ENCODE measurements at regions of chr5 and their contacts with region 1.

Region 1: GRCh38 chr5:173972925-173973615 is 15.9 kb upstream of the C5orf47 start:
- DNase-seq: peak; percentile 68 to 82
- ATAC-seq: peak; percentile 83 to 84
- H3K4me3 ChIP-seq: peak overlapping the region; percentile 45 to 63 (median 54)
- H3K27ac ChIP-seq: peak overlapping the region; percentile 74 to 85 (median 78)
- H3K4me1 ChIP-seq: peaks cover 5 to 8% of the 10 kb centered on the region in 2 donors
- H3K27me3 ChIP-seq: no peaks in the 10 kb centered on the region
- CTCF ChIP-seq: peak; percentile 88 to 98 (median 94)
- POLR2A ChIP-seq: no peak

Region 2: GRCh38 chr5:173331956-173332479 is 641.1 kb before region 1 on chr5:
- in situ Hi-C with region 1: no loop called
- intact Hi-C with region 1: loop called (anchors 10 kb)
- DNase-seq: peak; percentile 49 to 82
- ATAC-seq: peak; percentile 47
- H3K4me3 ChIP-seq: no peak overlapping the region
- H3K27ac ChIP-seq: no peak overlapping the region
- H3K4me1 ChIP-seq: peaks cover 8 to 27% of the 10 kb centered on the region in 2 donors
- H3K27me3 ChIP-seq: no peaks in the 10 kb centered on the region
- CTCF ChIP-seq: peak; percentile 84 to 93 (median 90)
- POLR2A ChIP-seq: no peak

Region 3: GRCh38 chr5:173623296-173623771 is 349.7 kb before region 1 on chr5:
- in situ Hi-C with region 1: loop called (anchors 5 kb)
- intact Hi-C with region 1: loop called (anchors 1 kb)
- DNase-seq: no peak
- ATAC-seq: no peak
- H3K4me3 ChIP-seq: no peak overlapping the region
- H3K27ac ChIP-seq: no peak overlapping the region
- H3K4me1 ChIP-seq: peaks cover 18 to 24% of the 10 kb centered on the region in 2 donors
- H3K27me3 ChIP-seq: no peaks in the 10 kb centered on the region
- CTCF ChIP-seq: no peak
- POLR2A ChIP-seq: no peak

Region 4: DNA sequence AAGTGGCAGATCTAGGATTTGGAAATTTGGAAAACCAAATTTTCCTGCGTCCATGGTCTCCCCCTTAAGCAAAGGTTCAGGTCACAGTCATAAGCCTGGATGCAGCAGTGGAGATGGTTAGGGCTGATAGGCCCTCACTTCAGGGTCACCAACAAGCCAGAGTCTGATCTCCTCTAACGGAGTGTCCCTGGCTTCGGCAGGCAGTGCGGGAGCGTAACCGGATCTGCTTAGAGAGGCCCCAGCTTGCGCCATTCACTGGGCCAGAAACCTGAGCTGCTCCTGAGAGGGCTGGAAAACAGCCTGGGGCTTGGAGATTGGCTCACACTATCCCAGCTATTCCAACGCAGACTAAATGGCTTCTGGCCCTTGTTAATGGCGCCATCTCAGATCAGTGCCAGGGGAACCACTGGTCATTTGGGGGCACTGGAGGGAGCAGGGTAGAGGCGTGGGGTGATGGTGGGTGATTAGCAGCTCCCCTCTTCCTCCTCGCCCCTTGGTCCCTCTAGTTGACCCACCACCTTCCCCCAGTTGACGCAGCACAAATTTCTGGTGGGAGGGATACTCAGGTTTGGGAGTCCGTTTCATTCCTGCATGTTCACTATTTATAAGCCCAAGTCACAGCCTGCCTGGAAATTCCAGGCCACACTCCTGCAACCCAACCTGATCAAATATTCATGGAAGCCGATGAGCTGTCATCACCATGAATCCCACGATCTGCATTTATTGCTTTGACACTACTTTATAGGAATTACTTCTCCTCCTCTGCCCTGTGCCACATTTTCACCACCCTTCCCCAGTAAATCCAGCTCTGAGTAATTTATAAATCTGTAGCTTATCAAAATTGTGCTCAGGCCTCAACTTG is 219.5 kb before region 1 on chr5:
- in situ Hi-C with region 1: loop called in 3 of 4 experiments (anchors 10 to 25 kb)
- intact Hi-C with region 1: loop called (anchors 5 kb)
- DNase-seq: peak; percentile 91 to 97
- ATAC-seq: peak; percentile 88 to 91
- H3K4me3 ChIP-seq: peak overlapping the region in 2 of 4 donors; percentile 29 to 35
- H3K27ac ChIP-seq: peak overlapping the region; percentile 88 to 97 (median 92)
- H3K4me1 ChIP-seq: peaks cover 44 to 47% of the 10 kb centered on the region in 2 donors
- H3K27me3 ChIP-seq: no peaks in the 10 kb centered on the region
- CTCF ChIP-seq: no peak
- POLR2A ChIP-seq: no peak

Region 5: GRCh38 chr5:173835131-173835530 is 137.9 kb before region 1 on chr5:
- in situ Hi-C with region 1: no loop called
- intact Hi-C with region 1: loop called (anchors 5 kb)
- DNase-seq: peak in 1 of 2 donors; percentile 52
- ATAC-seq: peak; percentile 4 to 19
- H3K4me3 ChIP-seq: no peak overlapping the region
- H3K27ac ChIP-seq: peak overlapping the region; percentile 57 to 87 (median 83)
- H3K4me1 ChIP-seq: peaks cover 34% of the 10 kb centered on the region in 2 donors
- H3K27me3 ChIP-seq: no peaks in the 10 kb centered on the region
- CTCF ChIP-seq: no peak
- POLR2A ChIP-seq: no peak

Region 6: GRCh38 chr5:173984218-173984617 is 11.1 kb after region 1 on chr5:
- in situ Hi-C with region 1: no loop called
- intact Hi-C with region 1: no loop called
- DNase-seq: no peak
- ATAC-seq: peak; percentile 52 to 53
- H3K4me3 ChIP-seq: no peak overlapping the region
- H3K27ac ChIP-seq: no peak overlapping the region
- H3K4me1 ChIP-seq: no peaks in the 10 kb centered on the region
- H3K27me3 ChIP-seq: no peaks in the 10 kb centered on the region
- CTCF ChIP-seq: peak; percentile 14 to 48 (median 34)
- POLR2A ChIP-seq: no peak

Region 7: DNA sequence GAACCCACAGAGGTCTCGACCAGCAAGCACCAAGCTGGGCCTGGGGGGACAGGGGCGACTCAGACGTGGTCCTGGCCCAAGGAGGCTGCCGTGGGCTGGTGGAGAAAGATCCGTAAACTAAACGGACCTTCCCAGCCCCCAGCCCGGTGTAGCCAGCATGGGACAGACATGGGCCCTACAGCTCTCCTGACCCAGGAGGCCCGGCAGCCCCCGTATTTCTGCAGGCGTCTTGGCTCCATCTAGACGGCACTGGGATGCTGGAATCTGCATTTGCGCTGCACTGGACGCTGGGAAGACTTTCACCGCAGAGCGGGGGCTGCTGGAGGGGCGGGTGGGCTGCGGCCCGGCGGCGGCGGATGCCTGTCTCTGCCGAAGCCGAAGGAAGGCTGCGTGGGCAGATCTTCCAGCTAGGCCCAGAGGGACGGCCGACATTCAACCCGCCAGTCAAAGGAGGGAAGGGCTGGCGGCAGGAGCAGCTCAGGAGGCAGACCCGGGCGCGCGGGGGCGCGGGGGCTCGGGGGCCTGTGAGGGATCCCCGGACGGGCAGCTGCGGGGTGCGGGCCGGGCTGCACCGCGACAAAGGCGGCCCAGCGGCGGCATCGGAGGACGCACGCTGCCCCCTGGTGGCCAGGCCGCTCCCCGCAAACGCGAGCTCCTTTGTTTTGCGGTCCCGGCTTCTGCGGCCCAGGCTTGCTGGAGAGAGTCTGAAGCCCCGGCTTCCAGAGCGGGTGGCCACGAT is 338.6 kb after region 1 on chr5:
- in situ Hi-C with region 1: no loop called
- intact Hi-C with region 1: loop called (anchors 5 kb)
- DNase-seq: peak in 1 of 2 donors; percentile 41
- ATAC-seq: peak; percentile 69 to 73
- H3K4me3 ChIP-seq: peak overlapping the region; percentile 33 to 59 (median 37)
- H3K27ac ChIP-seq: peak overlapping the region in 2 of 4 donors; percentile 8 to 74
- H3K4me1 ChIP-seq: peaks cover 15 to 19% of the 10 kb centered on the region in 2 donors
- H3K27me3 ChIP-seq: no peaks in the 10 kb centered on the region
- CTCF ChIP-seq: peak; percentile 63 to 89 (median 82)
- POLR2A ChIP-seq: no peak

Measured in gastrocnemius medialis (tissue), 4 donors.